HCT116 (cell line): ENCODE measurements at regions of chr12 and their contacts with region 1.

Region 1: GRCh38 chr12:93441617-93442410 is at the start of gene UBE2N:
- DNase-seq: peak; percentile 88
- ATAC-seq: peak; percentile 93
- H3K4me3 ChIP-seq: peak within 1 kb of the TSS; percentile 64 to 83
- H3K27ac ChIP-seq: peak within 1 kb of the TSS; percentile 86
- H3K4me1 ChIP-seq: peaks cover 19 to 27% of the 10 kb centered on the region in 2 experiments; a peak in 3 of 4 replicates
- H3K27me3 ChIP-seq: no peaks in the 10 kb centered on the region
- CTCF ChIP-seq: no peak
- POLR2A ChIP-seq: peak; percentile 87
- RAD21 ChIP-seq: no peak
- total RNA-seq, gene UBE2N: 140 TPM

Region 2: DNA sequence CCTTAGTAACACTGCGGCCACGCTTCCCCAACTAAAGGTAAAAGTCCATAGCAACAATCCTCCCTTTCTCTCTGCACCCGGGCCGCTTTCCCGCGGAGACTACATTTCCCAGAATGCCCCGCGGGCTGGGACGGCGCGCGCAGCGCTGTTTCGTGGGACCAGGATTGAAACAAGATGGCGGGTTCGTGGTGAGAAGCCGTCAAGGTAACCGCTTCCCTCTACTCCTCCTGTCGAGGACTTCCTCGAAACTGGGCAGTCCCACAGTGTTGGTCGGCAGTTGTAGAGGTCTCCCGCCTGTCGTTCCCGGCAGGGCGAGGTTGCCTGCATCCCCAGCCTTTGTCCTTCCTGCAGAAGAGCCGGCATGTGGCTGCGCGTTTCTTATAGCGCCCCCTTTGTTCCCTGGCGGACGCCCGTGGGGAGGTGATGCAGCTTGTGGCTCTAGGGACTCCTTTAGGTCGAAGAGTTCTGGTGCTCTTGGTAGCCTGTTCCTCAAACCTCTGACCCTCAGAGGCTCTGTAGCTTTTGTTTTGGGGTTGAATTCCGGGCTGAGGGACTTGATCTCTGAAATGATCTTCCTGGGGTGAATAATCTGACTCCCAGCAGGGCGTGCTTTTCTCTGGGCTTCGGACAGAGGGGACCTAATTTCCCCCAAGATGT is 25.7 kb after region 1 on chr12 and contains the start of gene MRPL42:
- CTCF ChIA-PET with region 1: no interaction called
- POLR2A ChIA-PET with region 1: no interaction called
- RAD21 ChIA-PET with region 1: no interaction called
- intact Hi-C with region 1: loop called (anchors 2 kb)
- DNase-seq: peak; percentile 86
- ATAC-seq: peak; percentile 90
- H3K4me3 ChIP-seq: peak within 1 kb of the TSS; percentile 74 to 80
- H3K27ac ChIP-seq: peak within 1 kb of the TSS; percentile 92
- H3K4me1 ChIP-seq: peaks cover 5 to 10% of the 10 kb centered on the region in 2 experiments; a peak in 3 of 4 replicates
- H3K27me3 ChIP-seq: no peaks in the 10 kb centered on the region
- CTCF ChIP-seq: peak; percentile 60 to 79 (median 73); a peak in 5 of 6 replicates
- POLR2A ChIP-seq: peak; percentile 65
- RAD21 ChIP-seq: 0 out of 2 replicates have a peak, but pooled peaks have one; percentile 9
- total RNA-seq, gene MRPL42: 120 TPM